Lower leg skin (tissue), 4 donors: ENCODE measurements at regions of chr14 and their contacts with region 1.

Region 1: DNA sequence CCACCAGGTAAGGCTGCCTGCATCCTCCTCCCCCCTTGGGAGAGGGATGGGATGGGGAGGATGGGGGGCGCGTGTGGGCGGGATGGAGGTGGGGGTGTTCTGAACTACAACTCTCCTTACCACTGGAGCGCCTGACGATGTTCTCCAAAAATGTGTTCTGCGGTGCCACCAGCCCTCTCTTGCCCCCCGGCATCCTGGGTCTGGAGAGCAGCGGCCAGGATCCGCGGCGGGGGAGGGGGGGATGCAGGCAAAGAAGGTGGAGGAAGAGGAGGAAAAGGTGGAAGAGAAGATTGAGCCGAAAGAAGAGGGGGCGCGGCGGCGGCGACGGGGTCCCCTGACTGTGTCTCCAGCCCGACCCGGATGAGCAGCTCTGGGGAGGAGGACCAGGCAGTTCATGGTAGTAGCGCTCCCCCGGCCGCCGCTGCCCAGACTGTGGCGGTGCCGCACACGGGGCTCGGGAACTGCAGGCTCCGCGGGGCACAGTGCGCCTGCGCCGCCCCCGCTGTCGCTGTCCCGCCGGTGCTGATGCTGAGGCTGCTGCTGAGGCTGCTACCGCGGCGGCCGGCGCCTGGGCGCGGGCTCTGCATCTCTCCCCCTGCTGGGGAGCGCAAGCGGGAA is at the start of gene KCNH5:
- DNase-seq: no peak
- H3K4me3 ChIP-seq: no peak within 1 kb of the TSS
- CTCF ChIP-seq: no peak
- POLR2A ChIP-seq: no peak
- total RNA-seq, gene KCNH5: 0.03 TPM in 1 of 4 donors, not detected in the others

Region 2: GRCh38 chr14:62162998-62163589 is 882.0 kb before region 1 on chr14:
- intact Hi-C with region 1: loop called (anchors 10 kb)
- DNase-seq: no peak
- H3K4me3 ChIP-seq: no peak overlapping the region
- CTCF ChIP-seq: no peak
- POLR2A ChIP-seq: no peak